ENCODE measurements at regions of chr11 and their contacts with region 1.

Region 1: DNA sequence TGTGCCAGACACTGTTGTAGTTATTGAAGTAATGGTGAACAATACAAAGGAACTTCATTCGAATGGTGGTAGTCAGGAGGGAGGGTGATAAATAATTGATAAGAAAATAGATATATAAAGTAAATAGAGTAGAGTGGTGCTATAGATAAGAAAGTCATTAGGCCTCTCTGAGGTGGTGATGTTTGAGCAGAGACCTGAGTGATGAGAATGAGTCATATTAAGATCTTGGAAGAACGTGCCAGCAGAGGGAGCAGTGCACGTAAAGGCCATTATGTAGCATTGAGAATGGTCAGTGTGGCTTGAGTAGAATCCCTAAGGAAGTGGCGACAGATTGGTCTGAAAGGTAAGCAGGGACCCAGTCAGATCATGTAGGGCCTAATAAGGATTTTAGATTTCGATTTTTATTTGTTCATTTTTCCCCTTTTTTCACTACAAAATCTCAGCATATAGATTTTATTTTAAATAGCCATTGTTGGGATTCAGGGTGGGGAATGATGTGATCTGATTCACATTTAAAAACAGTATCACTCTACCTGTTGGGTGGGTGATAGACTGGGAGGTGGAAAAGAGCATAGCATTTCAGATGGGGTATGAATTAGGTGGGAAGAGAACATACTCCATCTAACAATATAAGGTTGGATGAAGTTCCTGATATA is 44.7 kb downstream of the CCDC90B start:
- DNase-seq: peak; percentile 18 to 46 (median 41)
- H3K4me3 ChIP-seq: no peak overlapping the region
- H3K4me3 Mint-ChIP-seq: no peak overlapping the region
- H3K27ac ChIP-seq: no peak overlapping the region
- H3K27ac Mint-ChIP-seq: no peak overlapping the region
- H3K4me1 ChIP-seq: no peaks in the 10 kb centered on the region
- H3K4me1 Mint-ChIP-seq: no peaks in the 10 kb centered on the region
- H3K27me3 ChIP-seq: no peaks in the 10 kb centered on the region
- H3K27me3 Mint-ChIP-seq: no peaks in the 10 kb centered on the region
- CTCF ChIP-seq: peak; percentile 55

Region 2: DNA sequence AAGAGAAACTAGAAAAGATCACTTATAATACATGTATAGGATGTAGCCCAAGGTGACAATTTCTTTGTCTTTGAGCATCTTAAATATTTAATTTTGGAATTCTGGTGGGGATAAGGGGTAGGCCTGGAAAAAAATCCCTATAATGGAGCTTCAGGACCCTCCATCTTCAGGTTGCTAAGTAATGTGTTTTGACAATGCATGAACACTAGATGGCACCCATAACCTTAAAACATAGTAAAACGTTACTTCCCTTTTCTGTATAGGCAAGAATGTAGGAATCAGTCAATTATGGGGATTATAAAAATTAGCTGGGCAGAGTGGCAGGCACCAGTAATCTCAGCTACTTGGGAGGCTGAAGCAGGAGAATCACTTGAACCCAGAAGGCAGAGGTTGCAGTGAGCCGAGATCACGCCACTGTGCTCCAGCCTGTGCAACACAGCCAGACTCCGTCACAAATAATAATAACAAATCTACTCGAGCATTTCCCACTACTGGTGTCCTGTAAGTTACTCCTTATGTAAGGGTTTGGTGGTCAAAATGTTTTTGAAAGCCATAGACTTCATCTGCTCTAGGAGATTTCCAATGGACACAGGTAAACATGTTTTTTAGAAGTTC is 586.6 kb after region 1 on chr11:
- intact Hi-C with region 1: loop called in 1 of 2 experiments (anchors 10 kb)
- DNase-seq: peak in 1 of 3 donors; percentile 3
- H3K4me3 ChIP-seq: no peak overlapping the region
- H3K4me3 Mint-ChIP-seq: no peak overlapping the region
- H3K27ac ChIP-seq: no peak overlapping the region
- H3K27ac Mint-ChIP-seq: no peak overlapping the region
- H3K4me1 ChIP-seq: no peaks in the 10 kb centered on the region
- H3K4me1 Mint-ChIP-seq: no peaks in the 10 kb centered on the region
- H3K27me3 ChIP-seq: no peaks in the 10 kb centered on the region
- H3K27me3 Mint-ChIP-seq: peaks cover 0 to 6% (median 0%) of the 10 kb centered on the region in 3 donors
- CTCF ChIP-seq: peak; percentile 62